PC-3 (cell line): ENCODE measurements at regions of chr6 and their contacts with region 1.

Region 1: DNA sequence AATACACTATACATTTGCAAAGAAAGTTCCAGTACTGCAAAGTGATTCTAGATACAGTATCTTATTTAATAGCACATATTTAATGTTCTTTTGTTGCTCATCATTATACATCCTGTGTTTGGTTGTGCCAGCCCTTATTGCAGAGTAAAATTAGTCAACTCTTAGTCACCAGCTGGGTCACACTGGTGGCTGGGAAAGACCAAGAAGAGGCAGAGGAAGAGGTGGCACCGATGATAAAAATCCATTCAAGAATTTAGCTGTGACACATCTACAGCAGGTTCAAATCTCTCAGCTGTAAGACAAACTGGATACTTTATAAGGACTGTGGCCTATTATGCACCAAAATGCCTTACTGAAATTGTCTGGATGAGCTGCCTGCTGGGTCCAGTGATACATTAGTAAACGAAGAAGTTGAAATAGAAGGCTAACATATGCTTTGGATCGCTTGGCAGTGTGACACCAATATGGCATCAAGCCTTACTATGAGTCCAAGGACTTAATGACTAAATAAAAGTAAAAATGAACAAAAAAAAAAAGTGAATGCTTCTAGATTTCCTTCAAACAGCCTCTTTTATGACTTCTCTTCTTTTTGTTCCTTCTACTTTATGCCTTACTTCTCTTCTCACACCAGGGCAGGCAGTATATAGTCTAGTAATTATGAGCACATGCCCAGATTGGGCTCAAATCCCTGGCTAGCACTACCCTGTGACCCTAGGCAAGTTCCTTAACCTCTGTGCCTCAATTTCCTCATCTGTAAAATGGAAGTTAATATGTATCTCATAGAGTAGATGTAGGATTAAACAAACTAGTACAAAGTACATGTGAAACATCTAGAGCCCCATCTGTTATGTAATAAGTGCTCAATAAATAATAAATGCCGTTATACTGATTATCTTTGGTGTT is 29.4 kb upstream of the RNF8 start:
- DNase-seq: peak; percentile 96
- ATAC-seq: peak; percentile 82
- H3K4me3 ChIP-seq: no peak overlapping the region
- H3K27ac ChIP-seq: peak overlapping the region; percentile 96
- H3K4me1 ChIP-seq: peaks cover 60% of the 10 kb centered on the region
- H3K27me3 ChIP-seq: no peaks in the 10 kb centered on the region
- CTCF ChIP-seq: no peak

Region 2: DNA sequence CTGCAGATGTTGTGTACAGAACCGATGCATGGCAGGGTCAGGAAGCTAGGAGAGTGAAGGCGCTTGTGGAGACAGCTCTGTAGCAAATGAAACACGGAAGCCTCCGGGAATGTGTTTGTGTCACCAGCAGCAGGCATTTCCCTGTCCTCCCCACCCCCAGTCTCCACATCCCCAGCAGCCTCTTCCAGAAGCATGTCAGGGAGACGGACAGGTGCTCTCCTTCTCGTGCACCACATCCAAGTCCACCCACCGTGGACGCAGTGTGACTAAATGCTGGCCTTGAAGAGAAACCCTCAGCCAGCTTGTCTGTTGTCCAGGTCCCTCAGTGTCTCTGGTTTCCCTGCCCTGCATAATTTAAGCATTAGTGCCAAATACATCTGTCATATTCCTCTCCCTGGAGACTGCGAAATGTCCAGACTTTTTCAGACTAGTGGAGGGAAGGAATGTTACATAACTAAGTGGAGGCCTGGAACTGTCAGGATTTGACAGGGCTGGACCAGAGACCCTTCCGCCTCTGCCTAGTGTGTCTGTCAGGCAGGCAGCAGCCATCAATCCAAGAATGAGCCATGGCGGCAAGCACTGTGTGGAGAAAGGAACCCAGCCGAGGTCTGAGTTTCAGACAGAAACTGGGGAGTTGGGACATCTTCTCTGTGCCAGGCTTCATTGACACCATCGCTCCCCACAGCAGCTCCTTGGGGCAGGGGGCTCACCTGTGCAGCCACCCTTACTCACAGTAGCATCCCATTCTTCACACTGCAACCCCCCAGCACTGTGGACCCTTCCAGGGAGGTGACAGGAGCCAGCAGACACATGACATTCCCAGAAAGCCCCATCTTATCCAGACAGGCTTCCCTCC is 396.5 kb before region 1 on chr6:
- CTCF ChIA-PET with region 1: no interaction called
- POLR2A ChIA-PET with region 1: no interaction called
- intact Hi-C with region 1: no loop called
- DNase-seq: no peak
- ATAC-seq: no peak
- H3K4me3 ChIP-seq: no peak overlapping the region
- H3K27ac ChIP-seq: no peak overlapping the region
- H3K4me1 ChIP-seq: peaks cover 13% of the 10 kb centered on the region
- H3K27me3 ChIP-seq: no peaks in the 10 kb centered on the region
- CTCF ChIP-seq: no peak

Region 3: GRCh38 chr6:37339741-37340638 is 15.6 kb after region 1 on chr6:
- CTCF ChIA-PET with region 1: interaction called, 4 read pairs
- POLR2A ChIA-PET with region 1: no interaction called
- intact Hi-C with region 1: loop called (anchors 2 kb)
- DNase-seq: no peak
- ATAC-seq: peak; percentile 47
- H3K4me3 ChIP-seq: no peak overlapping the region
- H3K27ac ChIP-seq: peak overlapping the region; percentile 58
- H3K4me1 ChIP-seq: peaks cover 19% of the 10 kb centered on the region
- H3K27me3 ChIP-seq: no peaks in the 10 kb centered on the region
- CTCF ChIP-seq: no peak

Region 4: GRCh38 chr6:37353761-37354525 is 29.6 kb after region 1 on chr6 and contains the start of gene RNF8:
- CTCF ChIA-PET with region 1: interaction called, 3 read pairs
- POLR2A ChIA-PET with region 1: interaction called, 5 read pairs
- intact Hi-C with region 1: loop called (anchors 1 kb)
- DNase-seq: peak; percentile 88
- ATAC-seq: peak; percentile 93
- H3K4me3 ChIP-seq: peak within 1 kb of the TSS; percentile 97
- H3K27ac ChIP-seq: no peak within 1 kb of the TSS
- H3K4me1 ChIP-seq: peaks cover 16% of the 10 kb centered on the region
- H3K27me3 ChIP-seq: no peaks in the 10 kb centered on the region
- CTCF ChIP-seq: no peak
- total RNA-seq, gene RNF8: 20.2 and 28.1 TPM in 2 replicates

Region 5: DNA sequence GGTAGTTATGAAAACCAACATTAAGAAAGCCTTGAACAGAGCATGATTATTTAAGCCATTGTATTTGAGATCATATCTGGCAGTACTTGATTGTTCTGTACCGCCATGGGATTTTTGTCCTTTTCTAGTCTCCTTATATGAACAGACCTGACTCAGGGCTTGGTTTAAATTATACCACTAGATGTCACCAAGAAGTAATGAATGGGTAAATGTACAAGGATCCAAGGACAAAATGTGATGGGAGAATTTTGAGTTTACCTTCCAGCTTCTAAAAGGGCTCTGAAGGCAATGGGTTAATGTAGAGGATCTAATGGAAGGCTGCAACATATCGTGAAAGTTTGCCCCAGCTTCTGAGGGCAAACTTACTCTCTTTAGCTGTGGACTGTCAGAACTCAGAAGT is 41.4 kb after region 1 on chr6:
- CTCF ChIA-PET with region 1: interaction called, 3 read pairs
- POLR2A ChIA-PET with region 1: no interaction called
- intact Hi-C with region 1: loop called (anchors 5 kb)
- DNase-seq: peak; percentile 23
- ATAC-seq: peak; percentile 49
- H3K4me3 ChIP-seq: no peak overlapping the region
- H3K27ac ChIP-seq: no peak overlapping the region
- H3K4me1 ChIP-seq: peaks cover 31% of the 10 kb centered on the region
- H3K27me3 ChIP-seq: no peaks in the 10 kb centered on the region
- CTCF ChIP-seq: peak; percentile 55; the same call in 1 of the 2 replicates

Region 6: DNA sequence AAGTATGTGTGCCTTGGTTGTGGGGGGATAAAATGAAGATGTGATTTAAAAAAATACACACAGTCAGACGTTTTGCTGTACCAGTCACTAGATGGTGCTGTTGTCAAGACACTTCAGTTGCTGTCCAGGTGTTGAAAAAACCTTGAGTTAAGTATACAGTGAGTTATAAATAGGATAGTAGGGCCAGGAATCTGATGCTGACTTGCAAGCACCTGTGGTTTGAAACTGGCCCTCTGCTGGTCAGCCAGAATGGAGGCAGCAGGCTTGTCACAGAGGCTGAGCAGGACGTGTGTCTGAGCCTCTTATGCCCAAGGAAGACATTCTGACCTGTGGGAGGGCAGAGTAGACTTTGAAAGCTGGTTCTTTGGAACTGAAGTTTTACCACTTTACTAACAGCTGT is 57.2 kb after region 1 on chr6:
- CTCF ChIA-PET with region 1: interaction called, 5 read pairs
- POLR2A ChIA-PET with region 1: no interaction called
- intact Hi-C with region 1: loop called (anchors 1 kb)
- DNase-seq: peak; percentile 88
- ATAC-seq: peak; percentile 93
- H3K4me3 ChIP-seq: no peak overlapping the region
- H3K27ac ChIP-seq: no peak overlapping the region
- H3K4me1 ChIP-seq: no peaks in the 10 kb centered on the region
- H3K27me3 ChIP-seq: no peaks in the 10 kb centered on the region
- CTCF ChIP-seq: peak; percentile 94

Region 7: GRCh38 chr6:37432916-37433656 is 108.7 kb after region 1 on chr6 and contains the start of gene CMTR1:
- CTCF ChIA-PET with region 1: no interaction called
- POLR2A ChIA-PET with region 1: no interaction called
- intact Hi-C with region 1: loop called (anchors 10 kb)
- DNase-seq: peak; percentile 93
- ATAC-seq: peak; percentile 97
- H3K4me3 ChIP-seq: peak within 1 kb of the TSS; percentile 84
- H3K27ac ChIP-seq: no peak within 1 kb of the TSS
- H3K4me1 ChIP-seq: peaks cover 18% of the 10 kb centered on the region; the same call in 1 of the 2 replicates
- H3K27me3 ChIP-seq: no peaks in the 10 kb centered on the region
- CTCF ChIP-seq: no peak
- total RNA-seq, gene CMTR1: 36.4 and 41.9 TPM in 2 replicates